GM12878 (cell line): ENCODE measurements at regions of chr6 and their contacts with region 1.

Region 1: DNA sequence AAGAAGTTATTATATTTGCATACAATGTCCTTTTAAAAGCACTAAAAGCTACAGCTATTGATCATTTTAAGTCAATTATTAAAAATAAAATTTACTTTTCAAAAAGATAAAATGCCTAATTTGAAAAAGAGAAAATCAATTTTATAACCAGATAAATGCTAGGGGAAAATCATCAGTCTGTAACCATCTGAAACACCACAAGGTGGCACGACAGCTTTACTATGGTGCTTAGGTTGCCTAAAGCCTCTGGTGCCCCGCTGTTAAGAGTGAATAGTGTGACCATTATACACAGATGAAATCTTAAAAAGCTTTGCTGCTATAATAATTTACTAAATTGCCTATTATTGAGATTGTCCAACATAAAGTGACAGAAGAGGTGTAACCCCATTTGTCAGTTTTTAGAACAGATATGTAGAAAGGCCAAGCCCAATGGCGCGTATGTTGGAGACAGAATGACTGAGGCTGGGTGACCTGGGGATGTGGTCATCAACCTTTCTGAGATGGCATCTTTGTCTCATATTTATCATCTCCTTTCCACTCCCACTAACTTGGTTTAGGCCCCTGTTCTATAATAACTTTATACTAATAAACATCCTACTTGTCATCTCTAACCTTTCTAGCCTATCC is 100.8 kb downstream of the MOXD1 start:
- DNase-seq: no peak
- ATAC-seq: peak; percentile 94
- H3K4me3 ChIP-seq: no peak overlapping the region
- H3K27ac ChIP-seq: no peak overlapping the region
- H3K4me1 ChIP-seq: no peaks in the 10 kb centered on the region
- H3K27me3 ChIP-seq: peaks cover 0 to 1% of the 10 kb centered on the region in 2 experiments; a peak in 1 of 4 replicates
- CTCF ChIP-seq: peak; percentile 51 to 69 (median 60); a peak in 5 of 6 replicates
- EP300 ChIP-seq: no peak
- POLR2A ChIP-seq: no peak
- RAD21 ChIP-seq: peak; percentile 94

Region 2: GRCh38 chr6:131923356-131923755 is 377.1 kb before region 1 on chr6:
- CTCF ChIA-PET with region 1: interaction called, 7 read pairs
- POLR2A ChIA-PET with region 1: no interaction called
- RAD21 ChIA-PET with region 1: interaction called, 4 read pairs
- SMC1A ChIA-PET with region 1: no interaction called
- in situ Hi-C with region 1: no loop called
- intact Hi-C with region 1: loop called (anchors 10 kb)
- DNase-seq: no peak
- ATAC-seq: peak; percentile 85
- H3K4me3 ChIP-seq: no peak overlapping the region
- H3K27ac ChIP-seq: no peak overlapping the region
- H3K4me1 ChIP-seq: no peaks in the 10 kb centered on the region
- H3K27me3 ChIP-seq: no peaks in the 10 kb centered on the region
- CTCF ChIP-seq: peak; percentile 53 to 72 (median 71)
- EP300 ChIP-seq: no peak
- POLR2A ChIP-seq: no peak
- RAD21 ChIP-seq: peak; percentile 53

Region 3: GRCh38 chr6:132365281-132365907 is 65.0 kb after region 1 on chr6:
- CTCF ChIA-PET with region 1: no interaction called
- POLR2A ChIA-PET with region 1: no interaction called
- RAD21 ChIA-PET with region 1: no interaction called
- SMC1A ChIA-PET with region 1: no interaction called
- in situ Hi-C with region 1: no loop called
- intact Hi-C with region 1: loop called (anchors 5 kb)
- DNase-seq: peak; percentile 81
- ATAC-seq: peak; percentile 96
- H3K4me3 ChIP-seq: no peak overlapping the region
- H3K27ac ChIP-seq: 0 out of 2 replicates have a peak overlapping the region, but pooled peaks have one; percentile 35
- H3K4me1 ChIP-seq: peaks cover 17% of the 10 kb centered on the region; the same call in 1 of the 2 replicates
- H3K27me3 ChIP-seq: peaks cover 0 to 3% of the 10 kb centered on the region in 2 experiments; a peak in 2 of 4 replicates
- CTCF ChIP-seq: no peak
- EP300 ChIP-seq: peak; percentile 96 to 99
- POLR2A ChIP-seq: no peak
- RAD21 ChIP-seq: no peak

Region 4: DNA sequence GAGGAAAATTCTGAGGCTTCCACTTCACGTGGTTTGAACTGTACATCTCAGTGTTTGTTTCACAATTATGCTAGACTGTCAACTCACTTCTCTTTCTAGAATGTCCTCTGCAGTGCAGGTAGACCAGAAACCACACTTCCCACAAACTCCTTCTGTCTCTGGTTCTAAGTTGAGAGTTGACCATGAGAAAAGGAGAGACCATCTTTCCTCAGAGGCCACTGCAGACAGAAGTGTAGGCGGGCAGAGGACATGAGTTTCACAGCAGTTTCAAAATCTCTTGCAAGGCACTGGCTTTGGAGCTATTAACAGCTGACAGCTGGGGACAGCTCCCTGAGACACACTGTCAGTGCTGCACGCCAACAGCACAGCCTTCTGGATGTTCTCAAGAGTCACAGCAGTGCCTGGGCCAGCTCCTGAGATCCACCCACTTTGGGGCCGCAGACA is 156.3 kb after region 1 on chr6:
- CTCF ChIA-PET with region 1: interaction called, 35 read pairs
- POLR2A ChIA-PET with region 1: no interaction called
- RAD21 ChIA-PET with region 1: interaction called, 9 read pairs
- SMC1A ChIA-PET with region 1: interaction called, 29 read pairs
- in situ Hi-C with region 1: no loop called
- intact Hi-C with region 1: loop called (anchors 1 kb)
- DNase-seq: peak; percentile 90
- ATAC-seq: peak; percentile 89
- H3K4me3 ChIP-seq: no peak overlapping the region
- H3K27ac ChIP-seq: no peak overlapping the region; the same call in 1 of the 2 replicates
- H3K4me1 ChIP-seq: peaks cover 33% of the 10 kb centered on the region
- H3K27me3 ChIP-seq: no peaks in the 10 kb centered on the region
- CTCF ChIP-seq: peak; percentile 45 to 62 (median 57); a peak in 5 of 6 replicates
- EP300 ChIP-seq: peak in 1 of 2 experiments; percentile 66; a peak in 2 of 4 replicates
- POLR2A ChIP-seq: no peak
- RAD21 ChIP-seq: peak; percentile 84

Region 5: GRCh38 chr6:132471788-132472187 is 171.4 kb after region 1 on chr6:
- CTCF ChIA-PET with region 1: interaction called, 11 read pairs
- POLR2A ChIA-PET with region 1: no interaction called
- RAD21 ChIA-PET with region 1: no interaction called
- SMC1A ChIA-PET with region 1: interaction called, 9 read pairs
- in situ Hi-C with region 1: no loop called
- intact Hi-C with region 1: no loop called
- DNase-seq: no peak
- ATAC-seq: no peak
- H3K4me3 ChIP-seq: no peak overlapping the region
- H3K27ac ChIP-seq: no peak overlapping the region
- H3K4me1 ChIP-seq: peaks cover 4% of the 10 kb centered on the region; the same call in 1 of the 2 replicates
- H3K27me3 ChIP-seq: no peaks in the 10 kb centered on the region
- CTCF ChIP-seq: no peak
- EP300 ChIP-seq: no peak
- POLR2A ChIP-seq: no peak
- RAD21 ChIP-seq: no peak

Region 6: DNA sequence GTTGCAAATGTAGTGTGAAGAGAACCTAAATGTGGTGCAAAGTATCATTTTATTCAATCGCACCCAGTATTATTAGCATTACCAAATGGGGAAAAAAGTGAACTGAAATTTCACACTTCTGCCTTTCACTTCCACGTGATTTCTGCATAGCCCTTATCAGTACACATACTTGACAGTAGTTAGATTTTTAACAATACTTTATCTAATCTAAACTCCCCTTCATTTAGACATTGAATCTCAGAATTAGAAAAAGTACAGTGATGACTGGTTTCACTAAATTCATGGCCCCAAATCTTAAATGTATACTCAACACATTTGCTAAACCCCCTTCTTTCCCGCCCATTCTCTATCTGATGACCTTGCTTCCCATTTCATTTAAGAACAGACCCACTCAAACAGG is 198.2 kb after region 1 on chr6:
- CTCF ChIA-PET with region 1: interaction called, 14 read pairs
- POLR2A ChIA-PET with region 1: no interaction called
- RAD21 ChIA-PET with region 1: interaction called, 5 read pairs
- SMC1A ChIA-PET with region 1: no interaction called
- in situ Hi-C with region 1: no loop called
- intact Hi-C with region 1: no loop called
- DNase-seq: peak; percentile 60
- ATAC-seq: peak; percentile 75
- H3K4me3 ChIP-seq: peak overlapping the region; percentile 22; the same call in 1 of the 2 replicates
- H3K27ac ChIP-seq: peak overlapping the region; percentile 76
- H3K4me1 ChIP-seq: peaks cover 53% of the 10 kb centered on the region
- H3K27me3 ChIP-seq: no peaks in the 10 kb centered on the region
- CTCF ChIP-seq: no peak
- EP300 ChIP-seq: peak; percentile 87 to 97
- POLR2A ChIP-seq: no peak
- RAD21 ChIP-seq: no peak

Region 7: DNA sequence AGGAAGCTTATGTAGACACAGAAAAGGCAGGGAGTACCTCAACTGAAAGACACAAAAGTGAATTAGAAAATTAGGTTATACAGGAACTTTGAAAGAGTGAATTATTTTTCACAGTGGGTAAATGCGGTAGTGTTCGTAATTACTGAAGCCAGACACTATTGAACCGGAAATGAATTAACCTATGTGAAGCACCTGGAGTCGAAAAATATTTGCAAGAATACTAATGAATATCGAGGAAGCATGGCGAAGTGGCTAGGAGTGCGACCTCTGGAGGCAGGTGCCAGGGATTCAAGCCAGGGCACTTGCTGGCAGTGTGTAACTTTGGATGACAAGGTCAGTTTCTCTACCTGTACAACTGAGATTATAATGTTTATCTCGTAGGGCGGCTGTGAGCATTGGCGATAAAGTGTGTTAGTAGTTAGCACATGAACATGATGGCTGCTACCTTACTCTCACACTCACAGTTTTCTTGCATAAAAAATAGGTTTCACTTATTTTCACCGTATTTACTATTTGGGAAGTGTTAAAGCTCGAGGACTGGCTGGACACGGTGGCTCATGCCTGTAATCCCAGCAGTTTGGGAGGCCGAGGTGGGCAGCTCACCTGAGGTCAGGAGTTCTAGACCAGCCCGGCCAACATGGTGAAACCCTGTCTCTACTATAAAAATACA is 498.6 kb after region 1 on chr6:
- CTCF ChIA-PET with region 1: no interaction called
- POLR2A ChIA-PET with region 1: no interaction called
- RAD21 ChIA-PET with region 1: no interaction called
- SMC1A ChIA-PET with region 1: no interaction called
- in situ Hi-C with region 1: no loop called
- intact Hi-C with region 1: loop called (anchors 10 kb)
- DNase-seq: peak; percentile 63
- ATAC-seq: peak; percentile 94
- H3K4me3 ChIP-seq: peak overlapping the region; percentile 82
- H3K27ac ChIP-seq: peak overlapping the region; percentile 87
- H3K4me1 ChIP-seq: peaks cover 3% of the 10 kb centered on the region; the same call in 1 of the 2 replicates
- H3K27me3 ChIP-seq: no peaks in the 10 kb centered on the region
- CTCF ChIP-seq: peak; percentile 78 to 90 (median 85)
- EP300 ChIP-seq: no peak
- POLR2A ChIP-seq: no peak
- RAD21 ChIP-seq: peak; percentile 55

Region 8: GRCh38 chr6:133568970-133569889 is 1268.8 kb after region 1 on chr6:
- CTCF ChIA-PET with region 1: no interaction called
- POLR2A ChIA-PET with region 1: no interaction called
- RAD21 ChIA-PET with region 1: no interaction called
- SMC1A ChIA-PET with region 1: no interaction called
- in situ Hi-C with region 1: no loop called
- intact Hi-C with region 1: no loop called
- DNase-seq: no peak
- ATAC-seq: peak; percentile 55
- H3K4me3 ChIP-seq: no peak overlapping the region
- H3K27ac ChIP-seq: no peak overlapping the region
- H3K4me1 ChIP-seq: no peaks in the 10 kb centered on the region
- H3K27me3 ChIP-seq: no peaks in the 10 kb centered on the region
- CTCF ChIP-seq: peak; percentile 43 to 59 (median 55)
- EP300 ChIP-seq: no peak
- POLR2A ChIP-seq: no peak
- RAD21 ChIP-seq: peak; percentile 63